ENCODE measurements at regions of chr1 and their contacts with region 1.

Region 1: DNA sequence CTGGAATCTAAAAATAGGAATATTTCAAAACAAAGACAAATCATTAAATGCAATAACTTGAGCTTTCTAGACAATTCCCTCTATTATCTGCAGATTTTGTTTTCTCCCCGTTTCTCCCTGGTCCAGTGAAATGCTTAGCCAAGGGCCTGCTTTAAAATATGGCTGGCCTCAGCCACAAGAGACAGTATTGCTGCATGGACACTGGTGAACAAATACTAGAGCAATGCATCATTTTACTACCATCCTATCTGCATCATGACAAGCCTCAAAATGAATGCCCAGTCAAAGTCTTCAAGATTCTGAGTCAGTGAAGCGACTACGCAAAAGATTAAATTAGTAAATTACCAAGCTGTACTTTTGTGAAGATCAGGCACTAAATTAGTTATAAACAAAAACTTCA is 80.5 kb downstream of the ENAH start:
- DNase-seq: no peak
- ATAC-seq: peak; percentile 56

Region 2: DNA sequence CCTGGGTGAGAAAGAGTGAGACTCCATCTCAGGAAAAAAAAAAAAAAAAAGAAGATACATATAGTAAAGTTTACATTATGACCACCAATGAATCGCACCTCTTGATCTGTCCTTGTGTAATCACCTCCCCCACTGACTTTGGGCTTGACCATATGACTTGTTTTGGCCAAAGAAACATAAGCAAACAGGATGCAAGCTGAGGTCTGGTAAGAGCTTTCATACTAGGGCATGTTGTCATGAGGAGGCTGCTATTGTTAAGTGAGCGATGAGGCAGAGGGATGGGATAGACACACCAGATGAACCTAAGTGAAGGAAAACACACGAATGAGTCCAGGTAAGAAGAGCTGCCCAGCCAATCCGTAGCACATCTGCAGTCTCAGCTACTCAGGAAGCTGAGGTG is 69.8 kb after region 1 on chr1:
- intact Hi-C with region 1: loop called (anchors 10 kb)
- DNase-seq: no peak
- ATAC-seq: no peak

Region 3: GRCh38 chr1:225896937-225897549 is 324.6 kb after region 1 on chr1:
- intact Hi-C with region 1: no loop called
- DNase-seq: peak; percentile 38
- ATAC-seq: peak; percentile 34

Measured in Right ventricle myocardium superior (tissue), 1 donor.